ENCODE measurements at regions of chr12 and their contacts with region 1.

Region 1: GRCh38 chr12:31922341-31923062 is 36.7 kb upstream of the RESF1 start:
- DNase-seq: no peak
- ATAC-seq: no peak
- H3K4me3 Mint-ChIP-seq: no peak overlapping the region
- H3K27ac Mint-ChIP-seq: no peak overlapping the region
- H3K4me1 Mint-ChIP-seq: peaks cover 2% of the 10 kb centered on the region; the same call in 1 of the 2 replicates
- H3K27me3 Mint-ChIP-seq: peaks cover 6% of the 10 kb centered on the region
- CTCF ChIP-seq: no peak

Region 2: GRCh38 chr12:31835276-31835882 is 87.1 kb before region 1 on chr12:
- CTCF ChIA-PET with region 1: no interaction called
- POLR2A ChIA-PET with region 1: interaction called, 12 read pairs
- DNase-seq: no peak
- ATAC-seq: no peak
- H3K4me3 Mint-ChIP-seq: no peak overlapping the region
- H3K27ac Mint-ChIP-seq: no peak overlapping the region
- H3K4me1 Mint-ChIP-seq: peaks cover 6% of the 10 kb centered on the region; the same call in 1 of the 2 replicates
- H3K27me3 Mint-ChIP-seq: no peaks in the 10 kb centered on the region; the same call in 1 of the 2 replicates
- CTCF ChIP-seq: no peak